ENCODE measurements at regions of chr13 and their contacts with region 1.

Region 1: DNA sequence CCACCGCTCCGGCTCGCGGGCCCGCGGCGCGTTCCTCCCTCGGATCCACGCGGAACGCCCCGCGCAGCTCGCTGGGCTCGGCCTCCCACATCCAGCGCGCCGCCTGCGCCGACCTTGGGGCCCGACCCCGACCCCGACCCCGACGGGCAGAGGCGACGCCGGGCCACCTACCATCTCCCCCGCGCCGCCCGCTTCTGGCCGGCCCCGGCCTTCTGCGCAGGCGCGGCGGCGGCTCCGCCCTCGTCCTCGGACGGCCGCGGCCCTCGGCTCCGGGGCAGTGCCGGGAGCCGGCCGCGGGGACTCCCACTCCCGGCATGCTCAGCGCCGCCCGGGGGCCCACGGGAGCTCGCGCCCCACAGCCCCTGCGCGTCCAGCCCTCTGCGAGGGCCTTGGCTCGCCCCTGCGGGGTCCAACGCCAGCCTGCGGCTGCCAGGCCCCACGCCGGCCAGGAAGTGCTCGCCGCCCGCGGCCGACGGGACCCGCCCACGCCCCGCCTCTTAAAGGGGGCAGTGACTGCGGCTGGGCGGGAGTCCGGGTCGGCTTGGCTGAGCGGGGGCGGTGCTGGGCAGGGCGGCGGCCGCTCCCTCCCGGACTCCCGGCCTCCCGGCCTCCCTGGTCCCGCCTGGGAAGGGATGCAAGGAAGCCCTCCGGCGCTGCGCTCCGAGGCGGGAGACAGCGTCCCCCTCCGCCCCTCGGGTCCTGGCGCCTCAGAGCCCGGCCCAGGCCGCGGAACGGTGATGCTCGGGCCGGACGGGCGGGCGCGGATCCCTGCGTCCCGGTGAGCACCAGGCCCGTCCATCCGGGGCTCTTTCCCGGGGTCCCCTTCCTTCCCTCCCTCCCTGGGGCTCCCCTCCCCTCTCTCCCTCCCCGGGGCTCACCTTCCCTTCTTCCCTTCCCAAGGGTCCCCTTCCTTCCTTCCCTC is at the start of gene DCUN1D2:
- DNase-seq: peak; percentile 65 to 94
- H3K4me3 ChIP-seq: peak within 1 kb of the TSS; percentile 82 to 95 (median 91)
- H3K27ac ChIP-seq: peak within 1 kb of the TSS; percentile 55; the same call in 1 of the 2 replicates
- H3K4me1 ChIP-seq: peaks cover 3 to 18% (median 12%) of the 10 kb centered on the region in 4 experiments
- H3K27me3 ChIP-seq: no peaks in the 10 kb centered on the region
- CTCF ChIP-seq: no peak
- EP300 ChIP-seq: peak in 1 of 2 experiments; percentile 10; a peak in 1 of 3 replicates
- POLR2A ChIP-seq: peak in 1 of 2 experiments; percentile 69; a peak in 1 of 3 replicates
- RAD21 ChIP-seq: no peak
- total RNA-seq, gene DCUN1D2: 35.2 and 35.3 TPM in 2 replicates

Region 2: GRCh38 chr13:113327766-113328471 is 162.8 kb before region 1 on chr13:
- CTCF ChIA-PET with region 1: no interaction called
- POLR2A ChIA-PET with region 1: no interaction called
- DNase-seq: no peak
- H3K4me3 ChIP-seq: no peak overlapping the region
- H3K27ac ChIP-seq: no peak overlapping the region
- H3K4me1 ChIP-seq: peaks cover 0 to 5% (median 0%) of the 10 kb centered on the region in 4 experiments; a peak in 3 of 7 replicates
- H3K27me3 ChIP-seq: no peaks in the 10 kb centered on the region
- CTCF ChIP-seq: no peak
- EP300 ChIP-seq: no peak
- POLR2A ChIP-seq: peak in 1 of 2 experiments; percentile 26; a peak in 1 of 3 replicates
- RAD21 ChIP-seq: no peak

Region 3: GRCh38 chr13:113458253-113459065 is 32.3 kb before region 1 on chr13:
- CTCF ChIA-PET with region 1: interaction called, 25 read pairs
- POLR2A ChIA-PET with region 1: no interaction called
- DNase-seq: no peak
- H3K4me3 ChIP-seq: no peak overlapping the region
- H3K27ac ChIP-seq: no peak overlapping the region
- H3K4me1 ChIP-seq: no peaks in the 10 kb centered on the region; a peak in 1 of 7 replicates
- H3K27me3 ChIP-seq: no peaks in the 10 kb centered on the region
- CTCF ChIP-seq: peak in 1 of 3 experiments; percentile 30; a peak in 1 of 4 replicates
- EP300 ChIP-seq: no peak
- POLR2A ChIP-seq: no peak
- RAD21 ChIP-seq: peak in 1 of 2 experiments; percentile 46; a peak in 3 of 4 replicates

Region 4: GRCh38 chr13:113474179-113474578 is 16.6 kb before region 1 on chr13:
- CTCF ChIA-PET with region 1: interaction called, 18 read pairs
- POLR2A ChIA-PET with region 1: interaction called, 10 read pairs
- DNase-seq: no peak
- H3K4me3 ChIP-seq: no peak overlapping the region
- H3K27ac ChIP-seq: no peak overlapping the region
- H3K4me1 ChIP-seq: peaks cover 0 to 4% (median 1%) of the 10 kb centered on the region in 4 experiments; a peak in 3 of 7 replicates
- H3K27me3 ChIP-seq: no peaks in the 10 kb centered on the region
- CTCF ChIP-seq: no peak
- EP300 ChIP-seq: no peak
- POLR2A ChIP-seq: no peak
- RAD21 ChIP-seq: no peak